Gastrocnemius medialis (tissue), 4 donors: ENCODE measurements at regions of chr4 and their contacts with region 1.

Region 1: DNA sequence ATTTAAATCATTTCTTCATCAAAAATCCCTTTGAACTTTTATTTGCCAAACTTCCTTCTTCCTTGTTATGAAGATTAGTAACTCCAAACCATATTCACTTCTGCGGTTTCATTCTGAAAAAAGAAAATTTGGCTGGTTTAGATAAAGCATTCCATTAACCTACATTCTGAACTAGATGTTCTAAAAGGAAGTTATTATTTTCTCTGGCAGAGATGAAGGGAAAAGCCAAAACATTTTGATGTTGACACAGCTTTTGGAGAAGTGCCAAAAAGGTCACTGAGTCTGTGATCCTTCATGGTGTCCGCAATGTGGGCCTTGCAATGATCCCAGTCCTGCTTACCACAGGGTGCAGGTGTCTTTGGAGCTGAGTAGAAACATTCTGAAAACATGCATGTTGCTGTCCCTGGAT is 36.0 kb downstream of the CXCL8 start:
- DNase-seq: peak; percentile 40 to 56
- ATAC-seq: peak; percentile 81 to 83
- H3K4me3 ChIP-seq: no peak overlapping the region
- H3K27ac ChIP-seq: peak overlapping the region in 3 of 4 donors; percentile 28 to 59 (median 31)
- H3K4me1 ChIP-seq: peaks cover 0 to 7% of the 10 kb centered on the region in 2 donors
- H3K27me3 ChIP-seq: no peaks in the 10 kb centered on the region
- CTCF ChIP-seq: no peak
- POLR2A ChIP-seq: no peak

Region 2: DNA sequence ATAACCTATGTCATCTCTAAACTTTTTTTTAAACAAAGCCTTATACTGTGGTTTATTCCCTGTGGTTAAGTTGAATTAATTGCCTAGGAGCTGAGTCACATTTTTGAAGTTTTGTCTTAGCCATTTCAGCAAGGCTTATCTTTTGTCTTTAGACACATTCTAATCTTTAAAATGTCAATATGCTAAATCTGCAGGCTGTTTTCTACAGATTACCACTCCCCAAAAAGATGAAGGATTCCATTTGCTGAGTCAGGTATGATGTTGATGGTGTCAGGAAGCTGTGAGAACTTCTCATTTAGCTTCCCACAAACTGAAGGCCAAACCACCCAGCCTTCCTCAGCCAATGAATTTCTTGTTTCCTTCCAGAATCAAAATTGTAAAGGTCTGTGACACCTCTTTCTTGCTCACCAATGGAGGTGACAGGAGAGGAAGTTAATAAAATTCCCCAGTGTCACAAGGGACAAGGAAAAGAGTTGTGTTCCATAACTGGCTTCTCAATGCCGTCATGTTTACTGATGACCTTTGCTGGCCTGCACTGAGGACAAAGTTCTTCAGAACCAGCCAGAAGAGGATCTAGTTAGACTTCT is 56.4 kb after region 1 on chr4:
- in situ Hi-C with region 1: no loop called
- intact Hi-C with region 1: loop called (anchors 5 kb)
- DNase-seq: no peak
- ATAC-seq: no peak
- H3K4me3 ChIP-seq: no peak overlapping the region
- H3K27ac ChIP-seq: no peak overlapping the region
- H3K4me1 ChIP-seq: no peaks in the 10 kb centered on the region
- H3K27me3 ChIP-seq: peaks cover 0 to 5% (median 3%) of the 10 kb centered on the region in 3 donors
- CTCF ChIP-seq: no peak
- POLR2A ChIP-seq: no peak